ENCODE measurements at regions of chr12 and their contacts with region 1.

Region 1: GRCh38 chr12:100142851-100143559 is at the start of gene BLTP3B:
- DNase-seq: peak; percentile 70 to 91 (median 84)
- ATAC-seq: peak; percentile 98
- H3K4me3 ChIP-seq: peak within 1 kb of the TSS; percentile 84
- H3K4me3 Mint-ChIP-seq: peak within 1 kb of the TSS; percentile 86 to 97 (median 95)
- H3K27ac ChIP-seq: peak within 1 kb of the TSS; percentile 93
- H3K27ac Mint-ChIP-seq: peak within 1 kb of the TSS; percentile 85 to 98 (median 94)
- H3K4me1 ChIP-seq: peaks cover 7 to 14% of the 10 kb centered on the region in 2 donors
- H3K4me1 Mint-ChIP-seq: peaks cover 31 to 46% (median 33%) of the 10 kb centered on the region in 7 donors
- H3K27me3 ChIP-seq: no peaks in the 10 kb centered on the region
- H3K27me3 Mint-ChIP-seq: no peaks in the 10 kb centered on the region
- total RNA-seq, gene BLTP3B: 13.1 to 28.9 (median 18.0) TPM

Region 2: GRCh38 chr12:98503592-98504367 is 1639.2 kb before region 1 on chr12:
- CTCF ChIA-PET with region 1: no interaction called
- POLR2A ChIA-PET with region 1: no interaction called
- intact Hi-C with region 1: loop called in 1 of 2 experiments (anchors 2 kb)
- DNase-seq: peak; percentile 89 to 95 (median 92)
- ATAC-seq: peak; percentile 94
- H3K4me3 ChIP-seq: peak overlapping the region; percentile 97
- H3K4me3 Mint-ChIP-seq: peak overlapping the region; percentile 89 to 99 (median 94)
- H3K27ac ChIP-seq: peak overlapping the region; percentile 90
- H3K27ac Mint-ChIP-seq: peak overlapping the region; percentile 95 to 100 (median 100)
- H3K4me1 ChIP-seq: peaks cover 0 to 11% of the 10 kb centered on the region in 2 donors
- H3K4me1 Mint-ChIP-seq: peaks cover 6 to 30% (median 23%) of the 10 kb centered on the region in 7 donors
- H3K27me3 ChIP-seq: no peaks in the 10 kb centered on the region
- H3K27me3 Mint-ChIP-seq: peaks cover 0 to 18% (median 3%) of the 10 kb centered on the region in 5 donors

Region 3: GRCh38 chr12:98644711-98645402 is 1498.1 kb before region 1 on chr12 and contains the starts of genes APAF1 and IKBIP:
- CTCF ChIA-PET with region 1: no interaction called
- POLR2A ChIA-PET with region 1: no interaction called
- intact Hi-C with region 1: loop called in 1 of 2 experiments (anchors 2 kb)
- DNase-seq: peak; percentile 92 to 98 (median 96)
- ATAC-seq: peak; percentile 96
- H3K4me3 ChIP-seq: peak within 1 kb of the TSS; percentile 72
- H3K4me3 Mint-ChIP-seq: peak within 1 kb of the TSS; percentile 94 to 100 (median 98)
- H3K27ac ChIP-seq: peak within 1 kb of the TSS; percentile 76
- H3K27ac Mint-ChIP-seq: peak within 1 kb of the TSS; percentile 84 to 97 (median 93)
- H3K4me1 ChIP-seq: peaks cover 0 to 8% of the 10 kb centered on the region in 2 donors
- H3K4me1 Mint-ChIP-seq: peaks cover 7 to 40% (median 27%) of the 10 kb centered on the region in 7 donors
- H3K27me3 ChIP-seq: no peaks in the 10 kb centered on the region
- H3K27me3 Mint-ChIP-seq: no peaks in the 10 kb centered on the region
- total RNA-seq, gene APAF1: 22.8 to 36.4 (median 28.6) TPM
- total RNA-seq, gene IKBIP: 2.3 to 24.6 (median 6.1) TPM

Region 4: DNA sequence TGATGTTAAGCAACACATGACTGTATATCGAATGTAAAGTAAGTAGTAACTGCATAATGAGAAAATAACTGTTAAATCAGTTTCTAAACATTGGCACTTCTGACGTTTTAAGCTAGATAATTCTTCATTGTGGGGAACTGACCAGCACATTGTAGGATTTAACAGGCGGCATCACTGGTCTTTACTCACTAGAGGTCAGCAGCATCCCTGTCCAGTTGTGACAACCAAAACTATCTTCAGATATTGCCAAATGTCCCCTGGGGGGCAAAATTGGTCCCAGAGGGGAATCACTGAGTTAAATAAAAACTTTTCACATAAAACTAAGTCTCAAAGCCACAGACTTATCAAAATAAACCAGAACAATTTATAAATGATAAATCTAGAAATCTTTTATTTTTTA is 65.6 kb before region 1 on chr12:
- CTCF ChIA-PET with region 1: no interaction called
- POLR2A ChIA-PET with region 1: no interaction called
- intact Hi-C with region 1: no loop called
- DNase-seq: no peak
- ATAC-seq: no peak
- H3K4me3 ChIP-seq: no peak overlapping the region
- H3K4me3 Mint-ChIP-seq: no peak overlapping the region
- H3K27ac ChIP-seq: no peak overlapping the region
- H3K27ac Mint-ChIP-seq: no peak overlapping the region
- H3K4me1 ChIP-seq: no peaks in the 10 kb centered on the region
- H3K4me1 Mint-ChIP-seq: no peaks in the 10 kb centered on the region
- H3K27me3 ChIP-seq: no peaks in the 10 kb centered on the region
- H3K27me3 Mint-ChIP-seq: no peaks in the 10 kb centered on the region

Region 5: DNA sequence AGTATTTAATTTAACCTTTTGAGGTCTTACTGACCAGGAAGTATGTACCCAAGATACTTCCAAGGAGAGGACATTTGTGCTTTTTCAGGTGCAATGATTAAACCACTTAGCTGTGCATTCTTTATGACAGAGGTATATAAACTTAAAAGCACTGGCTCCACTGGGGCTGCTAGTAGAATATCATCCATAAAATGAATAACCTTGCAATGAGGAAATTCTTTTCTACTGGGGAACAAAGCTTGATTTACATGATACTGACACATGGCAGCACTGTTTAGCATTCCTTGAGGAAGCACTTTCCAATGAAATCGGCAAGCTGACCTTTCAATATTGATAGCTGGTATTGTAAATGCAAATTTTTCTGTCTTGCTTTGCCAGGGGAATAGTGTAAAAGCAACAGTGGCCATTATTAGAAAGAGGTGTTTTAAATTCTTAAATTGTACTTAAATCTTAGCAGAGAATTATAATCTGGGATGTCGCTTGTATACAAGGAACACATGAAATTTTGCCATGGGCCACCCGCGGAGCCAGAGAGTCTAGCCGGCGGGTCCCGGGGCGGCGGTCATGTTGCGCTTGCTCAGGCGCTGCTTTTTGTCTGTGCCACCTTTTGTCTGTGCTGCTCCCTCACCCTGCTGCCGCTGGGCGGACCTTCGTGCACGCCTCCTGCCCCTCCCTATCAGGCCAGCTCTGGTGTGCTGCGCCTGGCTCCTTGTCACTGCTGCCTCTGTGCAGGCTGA is 20.6 kb after region 1 on chr12:
- CTCF ChIA-PET with region 1: no interaction called
- POLR2A ChIA-PET with region 1: no interaction called
- intact Hi-C with region 1: loop called in 1 of 2 experiments (anchors 1 kb)
- DNase-seq: peak; percentile 46 to 67 (median 61)
- ATAC-seq: peak; percentile 99
- H3K4me3 ChIP-seq: peak overlapping the region; percentile 34
- H3K4me3 Mint-ChIP-seq: peak overlapping the region; percentile 58 to 80 (median 72)
- H3K27ac ChIP-seq: no peak overlapping the region
- H3K27ac Mint-ChIP-seq: peak overlapping the region in 7 of 9 donors; percentile 18 to 64 (median 53)
- H3K4me1 ChIP-seq: peaks cover 0 to 7% of the 10 kb centered on the region in 2 donors
- H3K4me1 Mint-ChIP-seq: peaks cover 0 to 14% (median 11%) of the 10 kb centered on the region in 7 donors
- H3K27me3 ChIP-seq: no peaks in the 10 kb centered on the region
- H3K27me3 Mint-ChIP-seq: no peaks in the 10 kb centered on the region

Region 6: GRCh38 chr12:100554608-100555077 is 411.6 kb after region 1 on chr12:
- CTCF ChIA-PET with region 1: no interaction called
- POLR2A ChIA-PET with region 1: no interaction called
- intact Hi-C with region 1: loop called in 1 of 2 experiments (anchors 5 kb)
- DNase-seq: peak in 2 of 9 donors; percentile 4 to 13
- ATAC-seq: no peak
- H3K4me3 ChIP-seq: no peak overlapping the region
- H3K4me3 Mint-ChIP-seq: no peak overlapping the region
- H3K27ac ChIP-seq: no peak overlapping the region
- H3K27ac Mint-ChIP-seq: peak overlapping the region in 1 of 9 donors; percentile 25
- H3K4me1 ChIP-seq: no peaks in the 10 kb centered on the region
- H3K4me1 Mint-ChIP-seq: no peaks in the 10 kb centered on the region
- H3K27me3 ChIP-seq: no peaks in the 10 kb centered on the region
- H3K27me3 Mint-ChIP-seq: peaks cover 0 to 16% (median 7%) of the 10 kb centered on the region in 5 donors

Region 7: DNA sequence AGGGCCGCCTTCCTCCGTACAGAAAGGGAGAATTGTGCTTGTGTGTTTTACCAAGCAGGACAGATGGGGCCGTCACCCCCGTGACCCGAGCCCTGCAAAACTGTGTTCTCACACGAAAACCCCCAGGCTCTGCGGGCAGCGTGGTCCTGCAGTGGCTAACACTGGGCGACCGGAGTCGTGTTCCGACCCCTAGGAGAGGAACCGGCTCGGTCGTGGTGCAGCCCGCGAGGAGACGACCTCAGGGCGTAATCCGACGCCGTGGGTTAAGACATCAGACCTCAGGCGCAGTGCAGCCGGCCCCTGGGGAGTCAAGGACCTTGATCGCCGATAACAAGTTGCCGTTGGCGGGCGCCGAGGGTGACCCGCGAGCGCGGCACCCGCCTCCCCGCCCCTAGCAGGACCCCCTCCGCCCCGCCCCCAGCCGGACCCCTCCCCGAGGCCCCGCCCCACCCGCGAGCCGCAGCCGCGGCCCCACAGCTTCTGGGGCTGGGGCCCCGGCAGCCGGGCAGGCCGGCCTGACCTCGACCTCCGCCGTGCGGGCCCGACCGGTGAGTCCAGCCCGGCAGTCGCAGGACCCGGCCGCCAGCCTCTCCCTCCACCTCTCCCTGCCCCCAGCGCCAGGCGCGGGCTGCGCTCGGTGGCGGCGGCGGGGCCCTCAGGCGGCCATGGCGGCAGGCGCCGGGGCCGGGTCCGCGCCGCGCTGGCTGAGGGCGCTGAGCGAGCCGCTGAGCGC is 1554.4 kb after region 1 on chr12 and contains the start of gene CHPT1:
- CTCF ChIA-PET with region 1: no interaction called
- POLR2A ChIA-PET with region 1: no interaction called
- intact Hi-C with region 1: loop called in 1 of 2 experiments (anchors 5 kb)
- DNase-seq: peak; percentile 40 to 75 (median 58)
- ATAC-seq: peak; percentile 82
- H3K4me3 ChIP-seq: peak within 1 kb of the TSS; percentile 88
- H3K4me3 Mint-ChIP-seq: peak within 1 kb of the TSS; percentile 92 to 95 (median 94)
- H3K27ac ChIP-seq: peak within 1 kb of the TSS; percentile 70
- H3K27ac Mint-ChIP-seq: peak within 1 kb of the TSS; percentile 66 to 93 (median 90)
- H3K4me1 ChIP-seq: peaks cover 4 to 14% of the 10 kb centered on the region in 2 donors
- H3K4me1 Mint-ChIP-seq: peaks cover 17 to 61% (median 53%) of the 10 kb centered on the region in 7 donors
- H3K27me3 ChIP-seq: no peaks in the 10 kb centered on the region
- H3K27me3 Mint-ChIP-seq: peaks cover 0 to 23% (median 0%) of the 10 kb centered on the region in 5 donors
- total RNA-seq, gene CHPT1: 6.5 to 22.6 (median 14.5) TPM

Measured in naive thymus-derived CD4-positive, alpha-beta T cell (primary cell).